ENCODE measurements at regions of chr10 and their contacts with region 1.

Region 1: DNA sequence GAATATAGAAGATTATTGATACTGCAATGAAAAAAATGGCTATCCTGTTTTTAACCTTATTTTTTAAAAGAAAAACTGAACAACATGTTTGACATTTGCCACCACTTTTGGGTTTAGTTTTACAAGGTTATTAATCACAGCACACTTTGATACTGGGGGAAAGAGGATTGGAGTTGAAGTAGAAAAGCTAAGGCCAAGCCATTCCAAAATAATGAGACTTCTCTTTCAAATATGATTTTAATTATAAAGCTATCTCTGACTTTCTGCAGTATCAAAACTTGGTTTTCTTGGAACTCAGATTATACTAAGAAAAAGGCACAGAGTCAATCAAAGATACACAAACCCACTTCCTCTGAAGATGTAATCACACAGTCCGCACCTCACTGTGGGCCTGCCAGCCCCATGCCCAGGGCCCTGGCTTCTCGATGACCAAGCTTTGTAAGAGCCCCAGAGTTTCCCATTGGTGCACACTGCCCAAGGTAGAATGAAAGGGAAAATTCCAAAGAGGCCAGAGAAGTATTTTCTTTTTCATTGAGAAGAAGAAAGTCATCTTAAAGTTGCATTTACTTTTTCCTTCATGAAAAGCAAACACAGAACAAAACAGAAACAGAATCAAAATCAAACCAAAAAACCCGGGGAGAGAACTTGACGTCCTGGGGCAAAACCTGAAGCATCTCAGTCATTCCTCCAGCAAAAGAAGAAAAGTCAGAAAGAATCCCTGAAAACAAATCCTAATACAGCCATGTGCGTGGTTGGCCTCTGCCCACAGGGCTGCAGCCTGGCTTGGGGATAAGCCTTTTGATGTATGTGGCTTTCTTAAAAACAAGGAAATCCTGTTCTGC is 187.7 kb upstream of the KLF6 start:
- DNase-seq: peak; percentile 42
- H3K4me3 Mint-ChIP-seq: peak overlapping the region; percentile 79
- H3K27ac Mint-ChIP-seq: peak overlapping the region; percentile 98
- H3K4me1 Mint-ChIP-seq: peaks cover 42% of the 10 kb centered on the region
- H3K27me3 Mint-ChIP-seq: no peaks in the 10 kb centered on the region

Region 2: GRCh38 chr10:3902054-3902808 is 70.5 kb before region 1 on chr10:
- intact Hi-C with region 1: loop called (anchors 5 kb)
- DNase-seq: peak; percentile 47
- H3K4me3 Mint-ChIP-seq: peak overlapping the region; percentile 22
- H3K27ac Mint-ChIP-seq: peak overlapping the region; percentile 93
- H3K4me1 Mint-ChIP-seq: peaks cover 38% of the 10 kb centered on the region
- H3K27me3 Mint-ChIP-seq: no peaks in the 10 kb centered on the region

Region 3: GRCh38 chr10:3948843-3949242 is 23.8 kb before region 1 on chr10:
- intact Hi-C with region 1: loop called (anchors 2 kb)
- DNase-seq: peak; percentile 66
- H3K4me3 Mint-ChIP-seq: peak overlapping the region; percentile 8
- H3K27ac Mint-ChIP-seq: peak overlapping the region; percentile 55
- H3K4me1 Mint-ChIP-seq: peaks cover 50% of the 10 kb centered on the region
- H3K27me3 Mint-ChIP-seq: no peaks in the 10 kb centered on the region